Posterior cingulate gyrus (tissue), 11 donors: ENCODE measurements at regions of chr11 and their contacts with region 1.

Region 1: GRCh38 chr11:75022759-75023396 is 34.1 kb downstream of the NEU3 start:
- DNase-seq: peak; percentile 72 to 98 (median 88)

Region 2: DNA sequence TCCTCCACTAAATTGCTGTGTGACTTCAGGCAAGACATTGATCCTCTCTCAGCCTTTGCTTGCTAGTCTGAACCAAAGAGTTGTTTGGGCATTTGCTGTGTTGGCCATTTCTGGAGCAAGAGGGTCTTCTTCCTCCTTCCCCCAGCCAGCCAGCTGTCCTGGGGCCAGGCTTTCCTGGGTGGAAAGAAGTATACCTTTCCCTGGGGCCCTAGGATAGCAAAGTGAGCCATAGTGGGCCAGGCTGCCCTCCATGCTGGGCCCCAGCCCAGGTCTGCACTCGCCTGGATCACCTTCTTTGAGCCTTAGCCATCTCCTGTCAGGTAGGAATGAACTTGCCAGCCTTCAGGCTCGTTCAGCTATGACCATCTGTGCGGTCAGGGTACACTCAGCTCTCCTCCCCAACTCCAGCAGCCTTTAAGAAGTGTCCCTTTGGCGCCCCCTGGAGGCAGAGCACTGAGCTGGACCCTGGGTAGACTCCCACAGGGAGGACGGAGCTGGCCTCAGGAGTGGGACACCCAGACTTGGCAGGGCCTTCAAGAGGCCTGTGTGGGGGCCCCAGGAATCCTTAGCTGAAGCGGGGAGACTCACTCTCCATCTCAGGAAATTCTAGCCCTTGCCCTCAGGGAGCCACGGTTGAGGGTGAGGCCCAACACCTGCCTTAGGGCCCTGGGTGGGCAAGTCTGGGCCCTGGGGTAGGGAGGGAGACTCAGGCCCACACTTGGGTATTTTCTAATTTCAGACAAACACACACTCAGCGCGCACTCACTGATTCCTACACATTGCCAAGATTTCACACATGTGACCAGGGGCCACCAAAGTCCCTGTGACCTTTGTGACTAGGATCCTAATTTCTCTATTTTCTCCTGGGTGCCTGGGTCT is 182.0 kb after region 1 on chr11:
- intact Hi-C with region 1: loop called (anchors 2 kb)
- DNase-seq: peak; percentile 54 to 97 (median 83)

Region 3: DNA sequence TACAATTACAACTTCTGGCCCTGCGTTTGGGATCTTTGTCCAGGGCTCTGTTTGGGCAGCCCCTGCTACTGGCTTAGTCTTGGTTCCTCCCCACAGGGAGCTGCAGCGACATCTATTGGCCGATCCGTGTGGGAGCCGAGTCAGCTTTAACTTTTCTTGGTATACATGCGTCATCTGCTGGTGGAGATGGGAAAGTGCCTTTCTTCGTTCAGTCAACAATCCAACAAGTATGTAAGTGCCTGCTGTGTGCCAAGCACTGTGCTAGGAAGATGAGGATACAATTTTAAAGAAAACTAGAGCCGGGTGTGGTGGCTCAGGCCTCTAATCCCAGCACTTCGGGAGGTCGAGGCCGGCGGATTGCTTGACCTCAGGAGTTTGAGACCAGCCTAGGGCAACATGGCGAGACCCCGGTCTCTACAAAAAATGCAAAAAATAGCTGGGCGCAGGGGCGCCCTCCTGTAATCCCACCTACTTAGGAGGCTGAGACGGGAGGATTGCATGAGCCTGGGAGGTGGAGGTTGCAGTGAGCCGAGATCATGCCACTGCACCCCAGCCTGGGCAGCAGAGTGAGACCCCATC is 225.9 kb after region 1 on chr11:
- intact Hi-C with region 1: loop called (anchors 1 kb)
- DNase-seq: peak; percentile 75 to 98 (median 88)